Activated CD4-positive, alpha-beta T cell treated with anti-CD3 and anti-CD28 coated beads, Interleukin-2, amount 10 ng/mL, durations not matched to agents 24 days and 14 days (primary cell): ENCODE measurements at regions of chr22 and their contacts with region 1.

Region 1: DNA sequence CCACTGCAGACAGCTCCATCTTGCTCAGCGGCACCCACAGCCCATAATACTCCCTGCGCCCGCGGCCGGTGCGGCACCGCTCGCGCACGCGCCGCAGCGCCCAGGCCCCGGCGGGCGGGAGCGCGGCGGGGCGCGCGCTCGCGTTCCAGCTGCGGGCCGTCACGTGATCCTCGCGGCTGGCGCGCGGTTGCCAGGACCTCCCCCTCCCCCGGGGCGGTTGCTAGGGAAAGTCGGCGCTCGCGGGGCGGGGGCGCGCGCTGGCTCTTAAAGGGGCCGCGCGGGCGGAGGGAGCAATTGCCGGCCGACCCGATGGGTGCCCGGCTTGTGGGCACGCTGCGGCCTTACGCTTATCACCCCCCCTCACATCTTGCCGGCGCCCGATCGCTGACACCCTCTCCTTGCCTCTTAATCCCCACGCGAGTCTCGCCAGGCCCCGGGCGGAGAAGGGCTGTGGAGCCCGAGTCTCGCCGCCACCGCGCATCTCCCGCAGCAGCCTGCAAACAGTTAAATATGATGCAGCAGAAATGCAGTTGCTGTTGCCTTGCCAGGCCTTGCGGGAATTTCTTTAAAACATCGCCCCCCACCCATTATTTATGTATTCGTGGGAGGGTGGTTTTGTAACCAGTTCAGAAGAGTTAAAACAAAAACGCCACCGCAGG is at the start of gene CBX6:
- DNase-seq: peak; percentile 99
- H3K4me3 Mint-ChIP-seq: peak within 1 kb of the TSS; percentile 95
- H3K27ac Mint-ChIP-seq: peak within 1 kb of the TSS; percentile 94
- H3K4me1 Mint-ChIP-seq: peaks cover 53% of the 10 kb centered on the region
- H3K27me3 Mint-ChIP-seq: peaks cover 9% of the 10 kb centered on the region
- total RNA-seq, gene CBX6: 178 and 180 TPM in 2 replicates

Region 2: DNA sequence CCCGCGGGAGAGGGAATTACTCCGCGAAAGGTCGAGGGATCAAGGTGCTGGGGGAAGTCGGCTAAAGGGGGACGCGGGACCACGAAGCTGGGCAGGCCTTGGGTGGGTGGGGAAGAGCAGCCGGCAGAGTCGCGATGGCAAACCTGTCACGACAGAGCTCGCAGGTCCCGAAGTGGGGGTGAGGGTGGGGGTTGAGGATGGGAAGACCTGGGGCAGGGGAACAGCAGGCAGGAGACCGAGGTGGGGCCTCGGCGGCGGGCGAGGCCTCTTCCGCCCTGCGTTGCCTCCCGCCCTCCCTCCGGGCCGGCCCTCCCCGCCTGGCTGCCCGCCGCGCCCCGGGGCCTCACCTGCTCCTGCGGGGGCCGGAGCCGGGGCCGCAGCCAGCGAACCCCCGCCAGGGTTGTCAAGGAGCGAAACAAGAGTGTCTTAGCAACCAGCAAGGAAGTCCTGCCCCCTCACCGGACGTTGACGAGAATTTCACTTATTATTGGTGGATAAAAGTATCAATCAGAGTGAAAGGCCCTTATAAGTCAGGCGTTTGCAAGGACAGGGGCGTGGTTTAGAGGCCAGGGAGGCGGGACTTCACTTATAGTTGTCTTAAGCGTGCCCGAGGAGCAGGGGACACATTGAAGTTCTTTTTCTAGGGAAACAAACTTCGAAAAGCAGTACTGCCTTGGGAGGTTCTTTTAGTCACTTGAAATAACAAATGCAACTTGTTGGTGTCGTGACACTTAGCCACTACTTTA is 78.4 kb before region 1 on chr22 and contains the start of gene DNAL4:
- intact Hi-C with region 1: no loop called
- DNase-seq: peak; percentile 98
- H3K4me3 Mint-ChIP-seq: peak within 1 kb of the TSS; percentile 87
- H3K27ac Mint-ChIP-seq: peak within 1 kb of the TSS; percentile 80
- H3K4me1 Mint-ChIP-seq: peaks cover 16% of the 10 kb centered on the region
- H3K27me3 Mint-ChIP-seq: peaks cover 10% of the 10 kb centered on the region
- total RNA-seq, gene DNAL4: 5.5 and 6.3 TPM in 2 replicates

Region 3: DNA sequence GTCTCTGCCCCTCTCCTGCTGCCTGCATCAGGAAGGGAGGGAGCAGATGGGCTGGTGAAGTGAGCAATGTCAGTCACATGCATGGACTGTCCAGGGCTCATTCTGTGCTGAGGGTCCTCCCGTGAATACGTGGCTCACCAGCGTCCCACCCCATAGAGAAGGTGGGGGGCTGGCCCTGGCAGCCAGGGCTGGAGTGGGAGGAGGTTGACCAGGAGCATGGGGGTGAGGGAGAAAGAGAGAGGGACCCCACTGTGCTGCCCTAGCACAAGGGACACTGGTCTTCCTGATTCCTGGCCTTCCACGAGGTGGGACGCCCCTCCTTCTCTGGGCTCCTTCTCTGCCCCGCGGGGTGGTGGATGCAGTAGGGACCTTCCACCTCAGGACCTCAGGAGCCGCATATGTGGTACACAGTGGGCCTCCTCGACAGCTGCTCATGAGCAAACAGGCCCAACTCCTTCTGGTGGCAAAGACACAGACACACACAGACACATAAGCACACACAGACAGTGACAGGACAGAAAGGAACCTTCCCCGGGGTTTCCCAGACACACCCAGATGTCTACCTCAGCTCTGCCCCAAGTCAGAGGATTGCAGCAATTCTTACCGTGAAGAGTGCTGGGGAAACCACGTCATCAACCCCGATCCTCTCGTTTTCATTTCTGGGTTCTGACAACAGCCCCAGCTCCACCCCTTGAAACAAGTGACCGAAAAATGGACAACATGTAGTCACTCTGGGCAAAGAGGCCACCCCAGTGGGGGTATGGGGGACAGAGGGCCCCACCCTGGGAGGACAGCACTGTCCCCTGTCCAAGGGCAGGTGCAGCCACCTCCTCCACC is 81.5 kb after region 1 on chr22:
- intact Hi-C with region 1: loop called (anchors 1 kb)
- DNase-seq: peak; percentile 94
- H3K4me3 Mint-ChIP-seq: peak overlapping the region; percentile 73
- H3K27ac Mint-ChIP-seq: peak overlapping the region; percentile 98
- H3K4me1 Mint-ChIP-seq: peaks cover 49% of the 10 kb centered on the region
- H3K27me3 Mint-ChIP-seq: no peaks in the 10 kb centered on the region

Region 4: GRCh38 chr22:39003165-39003638 is 130.9 kb after region 1 on chr22:
- intact Hi-C with region 1: loop called (anchors 1 kb)
- DNase-seq: peak; percentile 92
- H3K4me3 Mint-ChIP-seq: no peak overlapping the region
- H3K27ac Mint-ChIP-seq: peak overlapping the region; percentile 69
- H3K4me1 Mint-ChIP-seq: peaks cover 9% of the 10 kb centered on the region
- H3K27me3 Mint-ChIP-seq: peaks cover 13% of the 10 kb centered on the region

Region 5: DNA sequence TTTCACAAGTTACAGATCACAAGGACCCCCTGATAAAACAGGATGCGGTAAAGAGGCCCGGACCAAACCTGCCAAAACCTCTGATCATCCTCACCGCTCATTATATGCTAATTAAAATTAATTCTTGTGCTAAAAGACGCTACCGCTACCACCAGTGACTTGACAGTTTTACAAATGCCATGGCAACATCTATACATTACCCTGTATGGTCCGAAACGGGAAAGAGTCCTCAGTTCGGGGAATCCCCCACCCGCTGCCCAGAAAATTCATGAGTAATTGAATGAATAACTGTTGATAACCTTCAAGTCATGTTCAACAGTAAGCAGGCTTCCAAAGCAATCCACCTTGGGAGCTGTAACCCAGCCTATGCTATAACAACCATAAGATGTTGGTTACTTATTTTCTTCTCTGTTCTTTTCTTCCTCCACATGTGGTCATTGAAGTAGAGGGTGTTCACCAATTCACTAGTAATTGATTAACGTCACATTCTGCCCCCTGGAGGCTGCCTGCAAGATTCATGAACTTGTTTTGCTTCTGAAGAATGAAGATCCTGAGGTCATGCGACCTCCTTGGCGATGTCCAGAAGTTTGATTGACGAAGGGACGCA is 245.4 kb after region 1 on chr22:
- intact Hi-C with region 1: loop called (anchors 2 kb)
- DNase-seq: peak; percentile 92
- H3K4me3 Mint-ChIP-seq: peak overlapping the region; percentile 38
- H3K27ac Mint-ChIP-seq: peak overlapping the region; percentile 85
- H3K4me1 Mint-ChIP-seq: peaks cover 41% of the 10 kb centered on the region
- H3K27me3 Mint-ChIP-seq: no peaks in the 10 kb centered on the region

Region 6: GRCh38 chr22:39319270-39320022 is 447.1 kb after region 1 on chr22 and contains the start of gene RPL3:
- intact Hi-C with region 1: loop called (anchors 1 kb)
- DNase-seq: peak; percentile 99
- H3K4me3 Mint-ChIP-seq: peak within 1 kb of the TSS; percentile 94
- H3K27ac Mint-ChIP-seq: peak within 1 kb of the TSS; percentile 99
- H3K4me1 Mint-ChIP-seq: peaks cover 37% of the 10 kb centered on the region
- H3K27me3 Mint-ChIP-seq: no peaks in the 10 kb centered on the region
- total RNA-seq, gene RPL3: 2,129 and 2,132 TPM in 2 replicates